PC-9 (cell line): ENCODE measurements at regions of chr19 and their contacts with region 1.

Region 1: DNA sequence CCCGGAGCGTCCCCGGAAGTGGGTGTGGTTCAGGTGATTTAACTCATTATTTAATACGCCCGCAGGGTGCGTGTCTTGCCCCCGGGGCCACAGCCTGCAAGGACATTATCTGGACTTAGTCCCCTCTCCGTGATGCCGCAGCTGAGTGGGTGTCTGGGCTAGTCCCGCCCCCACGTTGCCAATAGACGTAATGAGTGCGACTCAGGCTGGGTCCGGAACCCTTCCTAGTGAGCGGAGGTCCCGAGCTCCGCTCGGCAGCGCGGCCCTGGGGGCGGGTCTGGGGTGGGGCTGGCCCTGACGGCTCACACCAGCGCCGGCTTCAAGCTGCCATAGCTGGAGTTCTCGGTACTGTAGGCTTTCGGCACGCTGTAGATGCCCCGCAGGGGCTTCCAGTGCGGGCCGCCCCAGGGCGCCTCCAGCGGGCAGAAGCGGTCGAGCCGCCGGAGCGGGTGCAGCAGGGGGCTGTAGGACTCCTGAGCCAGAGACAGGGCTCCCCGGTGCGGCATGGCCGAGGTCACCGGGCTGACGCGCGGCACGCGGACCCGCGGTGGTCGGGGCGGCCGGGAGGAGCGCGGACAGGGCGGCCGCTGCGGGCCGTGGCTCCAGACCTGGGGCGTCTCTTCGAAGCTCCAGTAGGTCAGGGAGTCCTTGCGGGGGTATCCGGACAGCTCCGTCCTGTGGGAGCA is 918 bp upstream of the LHB start:
- DNase-seq: peak in 1 of 2 experiments; percentile 55
- H3K4me3 ChIP-seq: peak overlapping the region; percentile 48; the same call in 1 of the 2 replicates
- H3K27ac ChIP-seq: no peak overlapping the region
- H3K4me1 ChIP-seq: peaks cover 9% of the 10 kb centered on the region; the same call in 1 of the 2 replicates
- H3K27me3 ChIP-seq: no peaks in the 10 kb centered on the region
- CTCF ChIP-seq: peak; percentile 57; the same call in 1 of the 2 replicates

Region 2: DNA sequence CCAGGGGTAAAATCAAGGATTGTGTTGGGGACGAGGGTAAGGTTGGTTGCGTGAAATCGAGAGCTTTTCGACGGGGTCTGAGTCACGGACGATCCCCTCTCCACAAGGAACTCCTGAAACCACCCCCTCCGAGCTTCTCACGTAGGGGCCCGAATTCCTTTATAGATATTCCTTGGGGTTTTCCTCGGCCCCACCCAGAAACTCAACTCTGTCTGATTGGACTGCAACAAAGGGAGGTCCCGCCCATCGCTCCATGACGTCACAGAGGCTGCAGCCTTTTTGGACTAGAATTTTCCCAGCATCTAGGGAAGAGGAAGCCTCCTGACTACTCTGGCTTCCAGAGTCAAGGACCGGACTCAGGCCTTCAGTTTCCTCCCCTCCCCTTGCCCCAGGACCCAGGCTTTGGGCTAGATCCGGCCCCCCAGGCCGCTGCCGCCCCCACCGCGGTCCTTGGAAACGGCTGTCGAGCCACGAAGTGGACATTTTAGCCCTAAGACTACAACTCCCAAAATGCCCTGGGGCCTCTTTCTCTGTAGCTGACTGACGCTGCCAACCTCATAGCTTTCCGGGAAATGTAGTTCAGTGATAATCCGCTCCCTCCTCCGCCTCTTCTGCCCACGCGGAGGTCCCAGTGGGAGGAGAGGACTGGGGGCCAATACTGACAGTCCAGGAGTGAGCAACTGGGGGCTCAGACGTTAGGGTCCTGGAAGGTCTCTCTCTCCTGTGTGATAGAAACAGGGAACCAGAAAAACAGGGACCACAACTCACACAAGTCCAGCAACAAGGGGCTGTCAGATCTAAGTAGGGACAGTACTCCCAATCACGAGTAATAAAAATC is 270.9 kb before region 1 on chr19 and contains the start of gene IZUMO1:
- CTCF ChIA-PET with region 1: no interaction called
- POLR2A ChIA-PET with region 1: interaction called, 10 read pairs
- intact Hi-C with region 1: no loop called
- DNase-seq: peak; percentile 70 to 76
- H3K4me3 ChIP-seq: peak within 1 kb of the TSS; percentile 60
- H3K27ac ChIP-seq: no peak within 1 kb of the TSS
- H3K4me1 ChIP-seq: peaks cover 8% of the 10 kb centered on the region
- H3K27me3 ChIP-seq: no peaks in the 10 kb centered on the region
- CTCF ChIP-seq: no peak
- total RNA-seq, gene IZUMO1: 2.2 and 3.0 TPM in 2 replicates

Region 3: GRCh38 chr19:48946463-48947257 is 71.1 kb before region 1 on chr19:
- CTCF ChIA-PET with region 1: no interaction called
- POLR2A ChIA-PET with region 1: no interaction called
- intact Hi-C with region 1: no loop called
- DNase-seq: no peak
- H3K4me3 ChIP-seq: no peak overlapping the region
- H3K27ac ChIP-seq: no peak overlapping the region
- H3K4me1 ChIP-seq: no peaks in the 10 kb centered on the region
- H3K27me3 ChIP-seq: no peaks in the 10 kb centered on the region
- CTCF ChIP-seq: no peak

Region 4: GRCh38 chr19:49056010-49056901 is 38.4 kb after region 1 on chr19:
- CTCF ChIA-PET with region 1: no interaction called
- POLR2A ChIA-PET with region 1: no interaction called
- intact Hi-C with region 1: loop called (anchors 5 kb)
- DNase-seq: peak; percentile 54 to 77
- H3K4me3 ChIP-seq: peak overlapping the region; percentile 63
- H3K27ac ChIP-seq: no peak overlapping the region
- H3K4me1 ChIP-seq: 0 out of 2 replicates have a peak, but pooled peaks cover 10% of the 10 kb centered on the region
- H3K27me3 ChIP-seq: no peaks in the 10 kb centered on the region
- CTCF ChIP-seq: peak; percentile 78

Region 5: DNA sequence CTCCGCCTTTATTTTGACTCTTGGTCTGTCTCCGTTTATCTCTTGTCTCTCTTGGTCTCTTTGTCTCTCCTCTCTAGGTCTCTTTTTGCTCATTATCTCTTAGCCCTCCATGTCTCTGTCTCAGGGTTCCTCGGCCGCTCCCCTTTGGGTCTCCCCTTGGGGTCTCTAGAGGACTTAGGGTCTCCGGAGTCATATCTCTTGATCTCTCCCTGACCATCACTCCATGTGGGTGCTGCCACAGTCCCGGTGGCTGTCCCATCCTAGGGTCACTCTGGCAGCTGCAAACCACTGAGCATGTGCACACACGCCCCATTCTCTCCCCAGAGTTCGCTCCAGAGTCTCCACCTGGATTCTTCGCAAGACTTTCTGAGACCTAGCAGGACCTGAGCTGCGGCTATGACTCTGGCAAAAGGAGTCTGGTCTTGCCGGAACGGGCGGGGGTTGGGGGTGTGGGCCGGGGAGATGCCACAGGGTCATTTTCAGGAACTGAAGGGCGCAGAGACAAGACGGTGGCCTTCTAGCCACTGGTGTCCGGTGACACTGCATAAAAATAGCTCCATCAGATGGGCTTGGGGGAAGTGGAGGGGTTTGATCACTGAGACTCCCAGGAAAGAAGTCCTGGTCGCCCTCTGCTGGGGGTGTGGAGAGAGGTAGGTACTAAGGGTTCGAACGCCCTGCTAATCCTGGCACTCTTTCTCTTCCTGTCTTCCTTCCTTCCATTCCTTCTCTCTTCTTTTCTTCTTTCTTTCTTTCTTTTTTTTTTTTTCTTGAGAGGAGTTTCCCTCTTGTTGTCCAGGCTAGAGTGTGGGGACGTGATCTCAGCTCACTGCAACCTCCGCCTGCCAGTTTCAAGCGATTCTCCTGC is 55.9 kb after region 1 on chr19:
- CTCF ChIA-PET with region 1: interaction called, 11 read pairs
- POLR2A ChIA-PET with region 1: no interaction called
- intact Hi-C with region 1: no loop called
- DNase-seq: peak in 1 of 2 experiments; percentile 56
- H3K4me3 ChIP-seq: no peak overlapping the region
- H3K27ac ChIP-seq: no peak overlapping the region
- H3K4me1 ChIP-seq: peaks cover 10% of the 10 kb centered on the region; the same call in 1 of the 2 replicates
- H3K27me3 ChIP-seq: peaks cover 29% of the 10 kb centered on the region
- CTCF ChIP-seq: peak; percentile 23; the same call in 1 of the 2 replicates

Region 6: DNA sequence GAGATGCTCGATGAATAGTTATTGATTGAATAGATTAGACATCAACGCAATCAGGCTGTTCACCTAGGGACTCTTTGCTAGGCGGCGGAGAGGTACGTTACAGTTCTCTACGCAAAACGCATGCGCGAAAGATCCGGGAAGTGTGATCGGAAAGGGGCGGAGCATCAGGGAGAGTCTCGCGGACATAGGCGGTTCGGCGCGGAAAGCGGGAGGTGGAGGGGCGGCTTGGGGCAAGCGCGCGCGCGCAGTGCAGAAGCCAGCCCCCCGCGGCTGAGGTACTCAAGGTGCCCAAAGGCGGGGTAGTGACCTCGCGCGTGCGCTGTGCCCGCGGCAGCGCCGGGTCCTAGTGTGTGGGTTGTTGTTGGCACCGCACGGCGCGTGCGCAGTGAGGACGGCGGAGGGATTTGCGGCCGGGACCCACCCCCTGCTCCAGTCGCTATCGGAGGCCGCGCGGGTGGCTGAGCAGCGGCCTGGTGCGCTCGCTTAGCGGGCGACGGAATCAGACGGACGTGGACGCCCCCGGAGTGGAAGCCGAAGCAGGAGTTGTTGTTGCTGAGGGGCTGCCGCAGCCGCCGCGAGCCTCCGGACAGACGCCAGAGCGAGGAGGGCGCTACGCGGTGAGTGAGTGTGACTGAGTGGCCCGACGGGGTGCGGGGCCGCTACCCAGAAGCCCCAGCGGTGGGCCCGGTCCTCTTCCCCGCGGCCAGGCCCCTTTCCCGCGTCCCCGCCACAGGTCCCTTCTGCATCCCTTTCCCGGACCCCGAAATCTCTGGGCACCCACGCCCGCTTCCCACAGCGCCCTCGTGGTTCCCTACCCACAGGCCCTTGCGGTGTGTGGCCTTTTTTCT is 67.4 kb after region 1 on chr19 and contains the start of gene SNRNP70:
- CTCF ChIA-PET with region 1: no interaction called
- POLR2A ChIA-PET with region 1: interaction called, 25 read pairs
- intact Hi-C with region 1: no loop called
- DNase-seq: peak; percentile 97 to 100
- H3K4me3 ChIP-seq: peak within 1 kb of the TSS; percentile 77
- H3K27ac ChIP-seq: peak within 1 kb of the TSS; percentile 41
- H3K4me1 ChIP-seq: peaks cover 15% of the 10 kb centered on the region
- H3K27me3 ChIP-seq: no peaks in the 10 kb centered on the region
- CTCF ChIP-seq: 0 out of 2 replicates have a peak, but pooled peaks have one; percentile 27
- total RNA-seq, gene SNRNP70: 151 and 199 TPM in 2 replicates